Calu3 (cell line): ENCODE measurements at regions of chr20 and their contacts with region 1.

Region 1: DNA sequence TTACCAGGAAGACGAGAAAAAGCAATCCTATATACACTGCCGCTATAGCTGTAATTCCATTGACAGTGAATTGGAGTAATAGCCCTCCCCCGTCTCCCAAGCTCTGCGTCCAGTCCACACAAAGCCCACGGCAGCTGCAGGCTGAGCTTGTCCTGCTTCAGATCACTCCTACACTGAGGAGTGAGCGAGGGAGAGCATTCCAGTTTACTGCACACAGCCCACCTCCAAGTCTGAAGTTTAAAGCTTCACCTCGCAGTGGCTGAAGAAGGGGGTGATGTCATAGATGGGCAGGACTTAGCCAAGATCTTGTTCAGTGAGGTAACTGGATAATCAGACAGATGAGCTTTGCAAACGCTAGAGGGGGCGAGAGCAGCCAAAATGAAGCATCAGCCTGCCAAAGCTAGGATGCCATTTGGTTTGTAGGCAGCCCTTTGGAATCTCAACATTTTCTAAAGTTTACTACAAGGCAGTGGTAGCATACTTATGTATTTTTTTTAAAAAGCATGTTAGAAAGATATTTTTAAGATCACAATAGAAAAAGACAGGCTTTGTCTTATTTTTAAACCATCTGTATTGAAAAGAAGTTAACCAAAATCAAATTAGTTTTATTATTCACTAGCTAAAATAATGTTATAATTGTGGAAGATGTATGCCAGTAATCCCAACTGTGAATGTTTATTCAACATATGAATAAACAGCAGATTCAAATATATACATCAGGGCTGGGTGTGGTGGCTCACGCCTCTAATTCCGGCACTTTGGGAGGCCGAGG is at the start of gene FLRT3:
- DNase-seq: peak; percentile 77
- H3K4me3 Mint-ChIP-seq: peak within 1 kb of the TSS; percentile 72
- H3K27ac Mint-ChIP-seq: peak within 1 kb of the TSS; percentile 61
- H3K4me1 Mint-ChIP-seq: peaks cover 9% of the 10 kb centered on the region
- H3K27me3 Mint-ChIP-seq: no peaks in the 10 kb centered on the region
- CTCF ChIP-seq: peak; percentile 46
- total RNA-seq, gene FLRT3: 4.6 and 9.5 TPM in 2 replicates

Region 2: DNA sequence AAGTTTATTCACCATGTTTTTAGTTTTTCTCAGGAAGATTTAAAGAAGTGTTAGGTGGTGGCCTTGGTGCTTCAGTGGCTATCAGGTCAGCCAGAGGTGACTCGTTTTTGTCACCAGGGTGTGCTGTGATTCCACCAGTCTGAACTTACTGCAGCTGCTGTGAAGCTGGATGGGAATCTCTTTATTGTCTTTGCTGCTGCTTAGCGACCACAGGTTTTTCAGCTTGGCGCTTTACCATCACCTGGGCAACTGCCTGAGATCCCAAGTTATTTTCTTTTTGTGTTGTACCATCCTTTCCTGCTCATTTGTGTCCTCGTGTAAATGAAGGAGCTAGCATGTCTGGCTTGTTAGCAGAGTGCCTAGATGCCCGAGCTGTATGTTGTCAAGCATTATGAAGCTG is 195.4 kb before region 1 on chr20:
- CTCF ChIA-PET with region 1: interaction called, 4 read pairs
- intact Hi-C with region 1: loop called (anchors 2 kb)
- DNase-seq: peak; percentile 43
- H3K4me3 Mint-ChIP-seq: no peak overlapping the region
- H3K27ac Mint-ChIP-seq: no peak overlapping the region
- H3K4me1 Mint-ChIP-seq: no peaks in the 10 kb centered on the region
- H3K27me3 Mint-ChIP-seq: no peaks in the 10 kb centered on the region
- CTCF ChIP-seq: no peak

Region 3: GRCh38 chr20:14415492-14415891 is 77.9 kb after region 1 on chr20:
- CTCF ChIA-PET with region 1: no interaction called
- intact Hi-C with region 1: loop called (anchors 5 kb)
- DNase-seq: peak; percentile 4
- H3K4me3 Mint-ChIP-seq: peak overlapping the region; percentile 39
- H3K27ac Mint-ChIP-seq: peak overlapping the region; percentile 87
- H3K4me1 Mint-ChIP-seq: peaks cover 56% of the 10 kb centered on the region
- H3K27me3 Mint-ChIP-seq: no peaks in the 10 kb centered on the region
- CTCF ChIP-seq: no peak

Region 4: GRCh38 chr20:14622796-14623195 is 285.2 kb after region 1 on chr20:
- CTCF ChIA-PET with region 1: interaction called, 8 read pairs
- intact Hi-C with region 1: loop called (anchors 2 kb)
- DNase-seq: peak; percentile 42
- H3K4me3 Mint-ChIP-seq: no peak overlapping the region
- H3K27ac Mint-ChIP-seq: no peak overlapping the region
- H3K4me1 Mint-ChIP-seq: peaks cover 1% of the 10 kb centered on the region
- H3K27me3 Mint-ChIP-seq: no peaks in the 10 kb centered on the region
- CTCF ChIP-seq: no peak

Region 5: DNA sequence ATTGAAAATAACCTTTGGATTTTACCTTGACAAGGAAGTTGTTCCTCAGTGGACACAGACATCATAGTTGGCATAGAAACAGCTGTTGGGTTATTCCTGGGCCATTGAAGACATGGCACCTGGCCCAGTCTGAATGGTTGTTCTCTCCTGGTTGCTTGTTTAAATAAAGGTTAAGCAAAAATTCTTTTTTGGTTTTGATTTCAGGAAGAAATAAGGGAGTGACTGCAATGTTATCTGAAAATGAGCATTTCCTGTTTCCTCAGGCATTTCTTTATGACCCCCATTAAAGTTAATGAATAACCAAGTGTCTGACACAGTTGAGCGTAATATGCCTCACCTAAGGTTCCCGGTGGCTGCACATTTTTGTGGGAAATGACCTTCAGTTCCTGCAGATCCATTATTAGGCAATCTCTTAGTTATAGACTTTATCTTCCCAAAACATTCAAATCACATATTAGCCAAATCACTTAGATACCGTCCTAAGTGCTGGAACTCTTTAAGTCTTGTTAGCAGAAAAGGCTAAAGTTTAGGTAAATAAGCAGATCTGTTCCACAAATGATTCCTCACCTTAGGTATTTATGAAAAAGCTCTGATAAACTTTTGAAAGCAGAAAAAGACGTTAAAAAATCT is 648.6 kb after region 1 on chr20:
- CTCF ChIA-PET with region 1: interaction called, 3 read pairs
- intact Hi-C with region 1: loop called (anchors 10 kb)
- DNase-seq: peak; percentile 62
- H3K4me3 Mint-ChIP-seq: no peak overlapping the region
- H3K27ac Mint-ChIP-seq: peak overlapping the region; percentile 54
- H3K4me1 Mint-ChIP-seq: peaks cover 12% of the 10 kb centered on the region
- H3K27me3 Mint-ChIP-seq: no peaks in the 10 kb centered on the region
- CTCF ChIP-seq: no peak

Region 6: GRCh38 chr20:15986690-15987089 is 1649.1 kb after region 1 on chr20:
- CTCF ChIA-PET with region 1: no interaction called
- intact Hi-C with region 1: loop called (anchors 10 kb)
- DNase-seq: no peak
- H3K4me3 Mint-ChIP-seq: peak overlapping the region; percentile 72
- H3K27ac Mint-ChIP-seq: peak overlapping the region; percentile 95
- H3K4me1 Mint-ChIP-seq: no peaks in the 10 kb centered on the region
- H3K27me3 Mint-ChIP-seq: no peaks in the 10 kb centered on the region
- CTCF ChIP-seq: no peak